ENCODE measurements at regions of chr20 and their contacts with region 1.

Region 1: GRCh38 chr20:63765082-63765873 is 25.7 kb downstream of the SLC2A4RG start:
- DNase-seq: no peak
- ATAC-seq: no peak
- H3K4me3 ChIP-seq: no peak overlapping the region
- H3K4me3 Mint-ChIP-seq: no peak overlapping the region
- H3K27ac ChIP-seq: no peak overlapping the region
- H3K27ac Mint-ChIP-seq: no peak overlapping the region
- H3K4me1 ChIP-seq: no peaks in the 10 kb centered on the region
- H3K4me1 Mint-ChIP-seq: no peaks in the 10 kb centered on the region
- H3K27me3 ChIP-seq: no peaks in the 10 kb centered on the region
- H3K27me3 Mint-ChIP-seq: no peaks in the 10 kb centered on the region
- CTCF ChIP-seq: no peak

Region 2: DNA sequence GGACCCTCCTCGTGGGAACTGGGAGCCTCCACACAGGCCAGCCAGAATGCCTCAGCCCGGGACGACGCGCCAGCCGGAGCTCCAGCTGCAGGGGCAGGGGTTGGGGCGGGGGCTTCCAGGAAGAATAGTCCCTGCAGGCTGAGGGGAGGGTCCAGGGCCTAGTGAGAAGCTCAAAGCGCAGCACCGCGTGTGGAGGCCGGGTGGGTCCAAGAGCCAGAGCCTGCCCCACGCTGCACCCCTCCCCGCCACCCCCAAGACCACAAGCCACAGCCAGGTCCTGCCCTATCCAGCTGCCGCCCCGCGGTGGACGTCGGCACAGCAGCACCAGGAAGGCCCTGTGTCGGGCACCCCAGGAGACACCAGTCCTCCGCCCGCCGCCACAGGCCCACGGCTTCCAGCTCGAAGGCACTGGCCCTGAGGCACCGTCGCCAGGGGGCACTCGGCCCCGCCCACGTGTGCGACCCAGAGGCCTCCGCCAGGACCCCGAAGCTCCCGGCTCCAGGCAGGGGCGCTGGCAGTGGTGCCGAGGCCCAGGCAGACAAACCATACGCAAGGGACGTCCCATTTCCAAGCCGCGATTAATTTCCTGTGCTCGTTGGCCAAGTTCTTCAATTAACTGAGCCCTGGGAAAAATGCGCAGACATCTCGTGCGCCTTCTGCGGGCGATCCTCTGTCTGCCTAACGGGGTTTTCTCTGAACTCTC is 312.3 kb before region 1 on chr20:
- CTCF ChIA-PET with region 1: no interaction called
- POLR2A ChIA-PET with region 1: no interaction called
- intact Hi-C with region 1: no loop called
- DNase-seq: peak in 3 of 14 experiments; percentile 8 to 55 (median 22)
- ATAC-seq: peak; percentile 59
- H3K4me3 ChIP-seq: no peak overlapping the region
- H3K4me3 Mint-ChIP-seq: no peak overlapping the region
- H3K27ac ChIP-seq: no peak overlapping the region
- H3K27ac Mint-ChIP-seq: no peak overlapping the region
- H3K4me1 ChIP-seq: peaks cover 23% of the 10 kb centered on the region
- H3K4me1 Mint-ChIP-seq: no peaks in the 10 kb centered on the region
- H3K27me3 ChIP-seq: peaks cover 13 to 21% of the 10 kb centered on the region in 2 experiments
- H3K27me3 Mint-ChIP-seq: peaks cover 25% of the 10 kb centered on the region
- CTCF ChIP-seq: no peak

Region 3: DNA sequence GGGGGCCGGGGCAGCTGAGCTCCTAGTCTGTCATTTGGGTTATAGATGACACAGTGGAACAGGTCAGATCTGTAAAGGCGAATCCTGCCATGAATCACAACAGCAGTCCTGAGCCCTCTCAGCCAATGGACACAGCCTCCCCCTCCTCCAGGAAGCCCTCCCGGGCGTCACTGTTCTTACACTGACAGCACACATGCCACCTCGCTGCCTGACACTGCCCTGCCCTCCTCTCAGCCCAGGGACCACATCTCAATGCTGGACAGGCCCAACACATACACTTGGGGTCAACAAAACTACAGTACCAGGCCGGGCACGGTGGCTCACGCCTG is 39.0 kb after region 1 on chr20:
- CTCF ChIA-PET with region 1: no interaction called
- POLR2A ChIA-PET with region 1: no interaction called
- intact Hi-C with region 1: loop called in 1 of 2 experiments (anchors 2 kb)
- DNase-seq: no peak
- ATAC-seq: no peak
- H3K4me3 ChIP-seq: no peak overlapping the region
- H3K4me3 Mint-ChIP-seq: no peak overlapping the region
- H3K27ac ChIP-seq: no peak overlapping the region
- H3K27ac Mint-ChIP-seq: no peak overlapping the region
- H3K4me1 ChIP-seq: peaks cover 9% of the 10 kb centered on the region
- H3K4me1 Mint-ChIP-seq: no peaks in the 10 kb centered on the region
- H3K27me3 ChIP-seq: peaks cover 7 to 8% of the 10 kb centered on the region in 2 experiments
- H3K27me3 Mint-ChIP-seq: peaks cover 18% of the 10 kb centered on the region
- CTCF ChIP-seq: no peak

Region 4: DNA sequence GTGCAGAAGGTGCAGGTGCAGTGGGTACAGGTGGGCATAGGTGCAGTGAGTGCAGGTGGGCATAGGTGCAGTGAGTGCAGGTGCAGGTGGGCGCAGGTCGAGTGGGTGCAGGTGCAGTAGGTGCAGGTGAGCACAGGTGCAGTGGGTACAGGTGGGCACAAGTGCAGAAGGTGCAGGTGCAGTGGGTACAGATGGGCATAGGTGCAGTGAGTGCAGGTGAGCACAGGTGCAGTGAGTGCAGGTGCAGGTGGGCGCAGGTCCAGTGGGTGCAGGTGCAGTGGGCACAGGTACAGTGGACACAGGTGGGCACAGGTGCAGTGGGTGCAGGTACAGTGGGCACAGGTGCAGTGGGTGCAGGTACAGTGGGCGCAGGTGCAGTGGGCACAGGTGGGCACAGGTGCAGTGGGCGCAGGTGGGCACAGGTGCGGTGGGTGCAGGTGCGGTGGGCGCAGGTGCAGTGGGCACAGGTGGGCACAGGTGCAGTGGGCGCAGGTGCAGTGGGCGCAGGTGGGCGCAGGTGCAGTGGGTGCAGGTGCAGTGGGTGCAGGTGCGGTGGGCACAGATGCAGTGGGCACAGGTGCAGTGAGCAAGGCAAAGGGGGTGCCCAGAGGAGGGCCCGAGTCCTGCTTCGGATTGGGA is 50.5 kb after region 1 on chr20:
- CTCF ChIA-PET with region 1: no interaction called
- POLR2A ChIA-PET with region 1: no interaction called
- intact Hi-C with region 1: no loop called
- DNase-seq: no peak
- ATAC-seq: no peak
- H3K4me3 ChIP-seq: no peak overlapping the region
- H3K4me3 Mint-ChIP-seq: no peak overlapping the region
- H3K27ac ChIP-seq: no peak overlapping the region
- H3K27ac Mint-ChIP-seq: no peak overlapping the region
- H3K4me1 ChIP-seq: no peaks in the 10 kb centered on the region
- H3K4me1 Mint-ChIP-seq: peaks cover 5% of the 10 kb centered on the region
- H3K27me3 ChIP-seq: peaks cover 0 to 2% of the 10 kb centered on the region in 2 experiments
- H3K27me3 Mint-ChIP-seq: peaks cover 5% of the 10 kb centered on the region
- CTCF ChIP-seq: no peak

Measured in CD4-positive, alpha-beta T cell (primary cell).